A549 (cell line): ENCODE measurements at regions of chr1 and their contacts with region 1.

Region 1: GRCh38 chr1:23484253-23485001 is 448 bp upstream of the ASAP3 start:
- DNase-seq: peak; percentile 82 to 88
- ATAC-seq: peak; percentile 91 to 95
- H3K4me3 ChIP-seq: peak overlapping the region; percentile 81
- H3K27ac ChIP-seq: peak overlapping the region; percentile 68 to 89
- H3K4me1 ChIP-seq: peaks cover 8% of the 10 kb centered on the region
- CTCF ChIP-seq: no peak
- EP300 ChIP-seq: no peak
- POLR2A ChIP-seq: no peak
- RAD21 ChIP-seq: no peak

Region 2: DNA sequence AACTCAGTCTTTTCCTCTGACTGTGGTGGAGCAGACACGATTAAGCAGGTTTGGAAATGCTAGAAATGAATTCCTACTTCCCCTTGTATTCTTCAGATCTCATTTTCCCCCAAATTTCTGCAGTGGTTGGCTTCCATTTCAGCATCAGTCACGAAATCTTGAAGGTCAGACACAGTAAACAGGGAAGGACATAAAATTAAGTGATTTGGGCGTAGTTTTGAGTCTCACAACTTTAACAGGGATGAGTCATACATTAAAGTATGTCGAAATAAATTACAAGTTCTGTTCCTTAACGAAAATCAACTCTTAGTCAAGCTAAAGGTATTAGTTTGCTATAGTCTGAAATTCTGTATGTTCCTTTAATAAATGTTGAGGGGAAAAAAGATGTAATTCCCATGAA is 201.5 kb before region 1 on chr1:
- CTCF ChIA-PET with region 1: no interaction called
- POLR2A ChIA-PET with region 1: interaction called, 12 read pairs
- DNase-seq: peak in 1 of 2 experiments; percentile 34
- ATAC-seq: peak in 1 of 2 experiments; percentile 44; a peak in 2 of 6 replicates
- H3K4me3 ChIP-seq: peak overlapping the region; percentile 6; the same call in 1 of the 3 replicates
- H3K27ac ChIP-seq: peak overlapping the region; percentile 62 to 80
- H3K4me1 ChIP-seq: peaks cover 57% of the 10 kb centered on the region
- CTCF ChIP-seq: no peak
- EP300 ChIP-seq: no peak
- POLR2A ChIP-seq: no peak
- RAD21 ChIP-seq: no peak

Region 3: DNA sequence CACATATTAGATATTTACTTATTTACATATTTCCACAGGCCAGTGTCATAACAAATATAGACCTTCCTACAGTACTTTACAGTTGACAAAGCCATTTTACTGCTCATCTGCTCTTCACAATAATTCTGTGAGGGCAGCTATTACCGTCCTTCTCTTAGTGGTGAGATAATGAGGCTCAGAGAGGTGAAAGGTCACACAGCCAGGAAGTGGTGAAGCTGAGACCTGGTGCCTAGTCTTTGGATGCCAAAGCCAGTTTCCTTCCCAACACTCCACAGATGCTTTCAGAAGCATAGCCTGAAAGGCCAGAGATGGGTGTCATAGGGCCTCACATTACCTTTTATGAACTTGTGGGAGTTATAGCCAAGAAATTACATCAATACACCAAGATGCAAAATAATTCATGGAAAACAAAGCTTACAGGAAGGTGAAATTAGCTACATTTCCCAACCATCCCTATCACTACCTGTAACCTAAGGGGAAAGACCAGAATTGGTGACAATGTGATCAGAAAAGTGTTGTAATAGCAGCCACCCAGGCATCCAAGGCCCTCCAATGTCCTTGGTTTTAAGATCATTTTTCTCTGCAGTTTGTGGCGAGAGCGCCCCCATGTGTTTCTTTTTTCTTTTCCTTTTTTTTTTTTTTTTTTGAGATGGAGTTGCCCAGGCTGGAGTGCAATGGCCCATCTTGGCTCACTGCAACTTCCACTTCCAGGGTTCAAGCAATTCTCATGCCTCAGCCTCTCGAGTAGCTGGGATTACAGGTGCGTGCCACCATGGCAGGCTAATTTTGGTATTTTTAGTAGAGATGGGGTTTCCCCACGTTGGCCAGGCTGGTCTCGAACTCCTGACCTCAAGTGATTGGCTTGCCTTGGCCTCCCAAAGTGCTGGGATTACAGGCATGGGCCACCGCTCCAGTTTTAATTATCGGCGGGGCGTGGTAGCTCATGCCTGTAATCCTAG is 180.7 kb after region 1 on chr1:
- CTCF ChIA-PET with region 1: no interaction called
- POLR2A ChIA-PET with region 1: no interaction called
- DNase-seq: peak in 1 of 2 experiments; percentile 31
- ATAC-seq: peak in 1 of 2 experiments; percentile 59; a peak in 2 of 6 replicates
- H3K4me3 ChIP-seq: no peak overlapping the region
- H3K27ac ChIP-seq: no peak overlapping the region
- H3K4me1 ChIP-seq: no peaks in the 10 kb centered on the region
- CTCF ChIP-seq: peak; percentile 40
- EP300 ChIP-seq: no peak
- POLR2A ChIP-seq: no peak
- RAD21 ChIP-seq: peak; percentile 36 to 59; a peak in 4 of 5 replicates